ENCODE measurements at regions of chr6 and their contacts with region 1.

Region 1: GRCh38 chr6:126015863-126016262 is 29.5 kb downstream of the TRMT11 start:
- DNase-seq: peak; percentile 44
- H3K4me3 ChIP-seq: no peak overlapping the region
- H3K27ac ChIP-seq: no peak overlapping the region
- H3K4me1 ChIP-seq: no peaks in the 10 kb centered on the region
- H3K27me3 ChIP-seq: no peaks in the 10 kb centered on the region
- CTCF ChIP-seq: no peak

Region 2: DNA sequence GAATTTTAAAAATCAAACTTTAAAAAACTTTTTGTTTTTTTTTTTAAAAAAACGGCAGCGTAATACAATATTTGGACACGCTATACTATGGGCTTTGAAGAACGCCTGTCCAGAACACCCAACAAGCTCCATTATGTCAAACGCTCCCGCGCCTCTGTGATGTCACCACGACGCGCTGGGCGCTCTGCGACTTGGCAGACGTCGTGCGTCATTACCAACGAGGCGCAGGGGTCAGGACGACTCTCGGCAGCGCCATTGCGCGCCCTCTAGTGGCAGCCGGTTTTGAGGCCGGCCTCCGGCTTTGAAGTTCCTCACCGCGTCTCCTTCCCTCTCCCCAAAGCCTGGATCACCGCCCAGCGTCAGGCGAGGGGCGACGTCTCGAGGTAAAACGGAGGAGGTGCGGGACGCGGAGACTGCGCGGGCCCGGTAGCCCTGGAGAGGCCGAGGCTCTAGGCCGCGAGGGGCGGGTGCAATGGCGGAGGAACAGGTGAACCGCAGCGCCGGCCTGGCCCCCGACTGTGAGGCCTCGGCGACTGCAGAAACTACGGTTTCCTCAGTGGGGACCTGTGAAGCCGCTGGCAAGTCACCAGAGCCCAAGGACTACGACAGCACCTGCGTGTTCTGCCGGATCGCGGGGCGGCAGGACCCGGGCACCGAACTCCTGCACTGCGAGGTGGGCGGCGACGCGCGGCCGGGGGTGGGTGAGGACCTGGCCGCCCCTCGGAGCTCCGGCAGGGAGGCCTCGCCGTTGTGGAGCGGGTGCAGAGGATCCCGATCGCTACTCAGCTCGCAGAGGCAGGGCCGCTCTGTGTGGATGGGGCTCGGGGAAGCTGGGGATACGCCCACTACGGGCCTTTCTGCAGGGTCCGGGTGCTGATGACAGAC is 59.1 kb before region 1 on chr6 and contains the start of gene HINT3:
- CTCF ChIA-PET with region 1: no interaction called
- dilution Hi-C with region 1: no loop called
- in situ Hi-C with region 1: no loop called
- intact Hi-C with region 1: no loop called
- DNase-seq: peak; percentile 93
- H3K4me3 ChIP-seq: peak within 1 kb of the TSS; percentile 87 to 94 (median 90)
- H3K27ac ChIP-seq: peak within 1 kb of the TSS; percentile 70
- H3K4me1 ChIP-seq: peaks cover 19% of the 10 kb centered on the region
- H3K27me3 ChIP-seq: no peaks in the 10 kb centered on the region
- CTCF ChIP-seq: peak; percentile 90 to 98
- total RNA-seq, gene HINT3: 13.3 to 23.5 TPM

Region 3: GRCh38 chr6:126086560-126086959 is 70.7 kb after region 1 on chr6:
- CTCF ChIA-PET with region 1: no interaction called
- dilution Hi-C with region 1: no loop called
- in situ Hi-C with region 1: no loop called
- intact Hi-C with region 1: no loop called
- DNase-seq: no peak
- H3K4me3 ChIP-seq: no peak overlapping the region
- H3K27ac ChIP-seq: no peak overlapping the region
- H3K4me1 ChIP-seq: no peaks in the 10 kb centered on the region
- H3K27me3 ChIP-seq: no peaks in the 10 kb centered on the region
- CTCF ChIP-seq: no peak

Region 4: DNA sequence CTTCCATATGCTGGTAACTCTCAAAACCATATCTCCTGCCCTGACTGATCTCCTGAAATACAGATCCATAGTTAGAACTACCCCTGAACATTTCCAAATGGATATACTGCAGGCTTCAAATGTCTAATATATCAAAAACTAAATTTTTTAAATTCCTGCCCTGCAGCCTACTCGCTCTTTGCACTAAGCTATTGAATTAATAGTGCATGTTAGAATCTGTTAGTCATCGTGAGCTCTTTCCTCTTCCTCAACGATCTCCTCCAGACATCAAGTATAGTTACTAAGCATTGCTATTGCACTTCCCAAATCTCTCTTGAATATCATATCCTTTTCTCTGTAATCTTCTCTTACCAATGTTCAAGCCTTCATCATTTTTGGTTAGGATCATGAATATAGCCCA is 1076.6 kb after region 1 on chr6:
- CTCF ChIA-PET with region 1: no interaction called
- dilution Hi-C with region 1: no loop called
- in situ Hi-C with region 1: loop called in 1 of 2 experiments (anchors 25 kb)
- intact Hi-C with region 1: no loop called
- DNase-seq: no peak
- H3K4me3 ChIP-seq: no peak overlapping the region
- H3K27ac ChIP-seq: no peak overlapping the region
- H3K4me1 ChIP-seq: no peaks in the 10 kb centered on the region
- H3K27me3 ChIP-seq: peaks cover 5% of the 10 kb centered on the region
- CTCF ChIP-seq: no peak

Measured in mammary epithelial cell (primary cell).